ENCODE measurements at regions of chr12 and their contacts with region 1.

Region 1: DNA sequence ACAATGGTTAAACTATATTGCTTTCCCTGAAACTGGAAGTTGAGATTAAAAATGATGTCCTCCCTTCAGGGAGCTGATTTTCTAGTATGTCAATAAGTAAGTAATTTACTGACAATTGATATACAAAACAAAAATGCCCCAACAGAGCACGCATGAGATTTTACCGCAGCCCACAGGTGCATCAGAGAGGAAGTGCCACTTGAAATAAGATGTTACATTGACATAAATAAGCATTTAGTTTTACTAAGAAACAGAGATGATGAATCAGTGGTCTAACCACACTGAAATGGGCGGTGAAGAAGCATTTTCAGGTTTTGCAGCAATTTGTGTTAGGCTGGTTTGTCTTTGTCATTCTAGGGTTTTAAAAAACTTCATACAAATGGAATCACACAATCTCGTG is 8.8 kb upstream of the CLECL1 start:
- DNase-seq: peak in 2 of 3 donors; percentile 20 to 24
- H3K4me3 ChIP-seq: no peak overlapping the region
- H3K4me3 Mint-ChIP-seq: peak overlapping the region in 1 of 2 donors; percentile 19
- H3K27ac ChIP-seq: peak overlapping the region in 1 of 2 donors; percentile 21
- H3K27ac Mint-ChIP-seq: peak overlapping the region in 4 of 7 donors; percentile 26 to 56 (median 30)
- H3K4me1 ChIP-seq: peaks cover 36 to 46% of the 10 kb centered on the region in 2 donors
- H3K4me1 Mint-ChIP-seq: peaks cover 46% of the 10 kb centered on the region
- H3K27me3 ChIP-seq: no peaks in the 10 kb centered on the region
- H3K27me3 Mint-ChIP-seq: no peaks in the 10 kb centered on the region
- CTCF ChIP-seq: no peak

Region 2: GRCh38 chr12:9597365-9597764 is 144.4 kb before region 1 on chr12:
- intact Hi-C with region 1: no loop called
- DNase-seq: no peak
- H3K4me3 ChIP-seq: no peak overlapping the region
- H3K4me3 Mint-ChIP-seq: no peak overlapping the region
- H3K27ac ChIP-seq: no peak overlapping the region
- H3K27ac Mint-ChIP-seq: no peak overlapping the region
- H3K4me1 ChIP-seq: no peaks in the 10 kb centered on the region
- H3K4me1 Mint-ChIP-seq: no peaks in the 10 kb centered on the region
- H3K27me3 ChIP-seq: no peaks in the 10 kb centered on the region
- H3K27me3 Mint-ChIP-seq: no peaks in the 10 kb centered on the region
- CTCF ChIP-seq: no peak

Region 3: GRCh38 chr12:9646794-9647781 is 94.6 kb before region 1 on chr12:
- intact Hi-C with region 1: no loop called
- DNase-seq: no peak
- H3K4me3 ChIP-seq: peak overlapping the region; percentile 51 to 84 (median 75)
- H3K4me3 Mint-ChIP-seq: peak overlapping the region; percentile 88 to 89
- H3K27ac ChIP-seq: peak overlapping the region; percentile 81 to 93
- H3K27ac Mint-ChIP-seq: peak overlapping the region; percentile 83 to 98 (median 87)
- H3K4me1 ChIP-seq: peaks cover 22 to 43% of the 10 kb centered on the region in 2 donors
- H3K4me1 Mint-ChIP-seq: peaks cover 33% of the 10 kb centered on the region
- H3K27me3 ChIP-seq: no peaks in the 10 kb centered on the region
- H3K27me3 Mint-ChIP-seq: peaks cover 0 to 2% (median 0%) of the 10 kb centered on the region in 3 donors
- CTCF ChIP-seq: no peak

Region 4: DNA sequence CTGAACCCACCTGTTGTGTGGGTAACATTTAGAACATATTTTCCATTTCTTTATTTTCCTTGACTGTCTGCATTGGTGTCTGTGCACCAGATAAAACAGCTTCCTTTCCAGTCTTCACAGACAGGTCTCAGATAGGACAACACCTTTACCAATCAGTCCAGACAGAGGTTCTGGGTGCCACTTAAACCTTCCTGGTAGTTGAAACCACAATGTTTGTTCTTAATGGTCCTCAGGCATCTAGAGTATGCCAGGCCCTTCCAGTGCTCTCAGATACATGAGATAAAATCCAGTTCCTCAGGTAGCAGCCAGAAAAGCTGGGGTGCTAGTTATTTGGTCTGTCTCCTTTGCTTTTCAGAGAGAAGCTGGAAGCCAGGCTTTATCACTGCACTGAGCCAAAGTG is 79.2 kb before region 1 on chr12:
- intact Hi-C with region 1: no loop called
- DNase-seq: no peak
- H3K4me3 ChIP-seq: no peak overlapping the region
- H3K4me3 Mint-ChIP-seq: no peak overlapping the region
- H3K27ac ChIP-seq: no peak overlapping the region
- H3K27ac Mint-ChIP-seq: no peak overlapping the region
- H3K4me1 ChIP-seq: no peaks in the 10 kb centered on the region
- H3K4me1 Mint-ChIP-seq: peaks cover 10% of the 10 kb centered on the region
- H3K27me3 ChIP-seq: no peaks in the 10 kb centered on the region
- H3K27me3 Mint-ChIP-seq: no peaks in the 10 kb centered on the region
- CTCF ChIP-seq: no peak

Region 5: DNA sequence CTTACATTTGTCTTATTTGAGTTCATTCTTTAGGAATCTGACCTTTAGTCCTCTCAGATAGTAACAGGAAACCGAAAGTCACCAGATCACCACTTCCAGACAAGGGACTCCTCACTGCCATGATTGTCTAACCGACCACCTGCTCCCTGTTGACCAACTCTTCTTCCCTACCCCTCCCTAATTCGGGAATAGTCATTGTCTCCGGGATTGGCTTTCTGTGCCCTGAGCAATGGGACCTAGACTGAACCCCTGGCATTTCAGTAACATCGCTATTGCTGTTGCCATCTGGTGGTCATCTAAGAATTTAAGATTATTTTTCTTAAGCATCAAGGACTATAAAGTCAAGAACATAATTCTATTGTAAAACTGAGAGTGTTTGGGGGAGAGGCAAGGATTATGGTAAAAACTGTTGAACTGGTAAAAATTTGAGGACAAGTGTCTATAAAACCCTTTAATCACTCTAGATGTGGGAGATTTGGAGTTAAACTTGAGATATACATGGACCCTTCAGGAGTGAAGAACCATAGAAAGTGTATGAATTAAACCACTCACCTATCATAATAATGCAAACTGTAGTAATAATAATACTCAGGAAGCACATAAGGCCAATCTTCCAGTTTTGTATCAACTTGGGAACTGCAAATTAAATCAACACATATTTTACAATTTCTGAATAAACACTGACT is 184.1 kb after region 1 on chr12:
- intact Hi-C with region 1: loop called in 1 of 2 experiments (anchors 10 kb)
- DNase-seq: peak in 2 of 3 donors; percentile 41 to 46
- H3K4me3 ChIP-seq: peak overlapping the region; percentile 25 to 67 (median 61)
- H3K4me3 Mint-ChIP-seq: peak overlapping the region; percentile 80 to 94
- H3K27ac ChIP-seq: peak overlapping the region in 1 of 2 donors; percentile 58
- H3K27ac Mint-ChIP-seq: peak overlapping the region in 5 of 7 donors; percentile 13 to 87 (median 44)
- H3K4me1 ChIP-seq: peaks cover 0 to 8% of the 10 kb centered on the region in 2 donors
- H3K4me1 Mint-ChIP-seq: peaks cover 18% of the 10 kb centered on the region
- H3K27me3 ChIP-seq: no peaks in the 10 kb centered on the region
- H3K27me3 Mint-ChIP-seq: peaks cover 0 to 1% (median 0%) of the 10 kb centered on the region in 3 donors
- CTCF ChIP-seq: peak; percentile 56

Region 6: DNA sequence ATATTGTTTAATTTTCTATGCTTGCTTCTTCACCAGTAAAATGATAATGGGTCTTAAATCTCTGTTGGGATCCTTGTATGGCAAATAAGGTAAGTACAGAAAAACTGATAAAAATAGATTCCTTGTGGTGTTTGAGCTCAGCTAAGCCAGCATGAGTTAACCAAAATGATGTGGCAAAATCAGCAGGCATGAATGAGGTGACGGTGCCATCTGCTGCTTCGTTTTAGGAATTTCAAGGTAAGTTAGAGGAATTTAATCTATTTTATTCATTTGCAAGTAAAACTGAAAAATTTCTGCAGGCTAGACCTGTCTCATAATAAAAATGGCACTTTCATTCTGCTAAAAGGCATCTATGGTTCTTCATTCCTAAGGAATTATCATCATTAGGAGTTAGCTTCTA is 398.3 kb after region 1 on chr12:
- intact Hi-C with region 1: loop called (anchors 5 kb)
- DNase-seq: peak; percentile 72 to 81 (median 75)
- H3K4me3 ChIP-seq: no peak overlapping the region
- H3K4me3 Mint-ChIP-seq: no peak overlapping the region
- H3K27ac ChIP-seq: no peak overlapping the region
- H3K27ac Mint-ChIP-seq: peak overlapping the region; percentile 5 to 73 (median 49)
- H3K4me1 ChIP-seq: peaks cover 6 to 7% of the 10 kb centered on the region in 2 donors
- H3K4me1 Mint-ChIP-seq: peaks cover 14% of the 10 kb centered on the region
- H3K27me3 ChIP-seq: no peaks in the 10 kb centered on the region
- H3K27me3 Mint-ChIP-seq: peaks cover 2 to 5% (median 3%) of the 10 kb centered on the region in 3 donors
- CTCF ChIP-seq: peak; percentile 82

Region 7: DNA sequence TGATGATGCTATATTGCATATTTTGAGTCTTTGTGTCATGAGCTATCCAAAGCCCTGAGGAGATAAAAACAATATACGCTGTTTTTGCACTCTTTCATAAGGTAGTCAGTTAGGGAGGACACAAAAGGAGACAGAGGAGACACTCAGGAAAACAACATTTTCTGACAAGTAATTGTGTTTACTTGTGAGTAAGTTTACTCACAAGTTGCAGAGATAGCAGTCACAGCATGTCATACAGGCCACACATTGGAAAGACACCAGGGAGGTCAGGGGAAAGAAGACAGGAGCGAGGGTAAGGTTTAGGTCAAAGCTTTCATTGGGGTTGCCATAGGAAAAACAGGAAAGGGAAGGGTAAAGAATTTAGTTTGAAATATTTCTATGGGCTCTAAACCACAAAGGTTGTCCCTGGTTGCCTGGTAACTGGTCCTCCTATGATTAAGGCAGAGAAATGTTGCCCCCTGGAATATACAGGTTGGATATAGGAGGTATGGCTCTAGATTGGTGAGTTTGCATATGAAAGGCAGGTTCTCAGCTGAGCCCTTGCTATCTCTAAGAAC is 463.6 kb after region 1 on chr12:
- intact Hi-C with region 1: loop called in 1 of 2 experiments (anchors 10 kb)
- DNase-seq: no peak
- H3K4me3 ChIP-seq: no peak overlapping the region
- H3K4me3 Mint-ChIP-seq: no peak overlapping the region
- H3K27ac ChIP-seq: no peak overlapping the region
- H3K27ac Mint-ChIP-seq: no peak overlapping the region
- H3K4me1 ChIP-seq: peaks cover 8% of the 10 kb centered on the region in 2 donors
- H3K4me1 Mint-ChIP-seq: peaks cover 10% of the 10 kb centered on the region
- H3K27me3 ChIP-seq: no peaks in the 10 kb centered on the region
- H3K27me3 Mint-ChIP-seq: peaks cover 0 to 3% (median 3%) of the 10 kb centered on the region in 3 donors
- CTCF ChIP-seq: no peak